ENCODE measurements at regions of chr1 and their contacts with region 1.

Region 1: DNA sequence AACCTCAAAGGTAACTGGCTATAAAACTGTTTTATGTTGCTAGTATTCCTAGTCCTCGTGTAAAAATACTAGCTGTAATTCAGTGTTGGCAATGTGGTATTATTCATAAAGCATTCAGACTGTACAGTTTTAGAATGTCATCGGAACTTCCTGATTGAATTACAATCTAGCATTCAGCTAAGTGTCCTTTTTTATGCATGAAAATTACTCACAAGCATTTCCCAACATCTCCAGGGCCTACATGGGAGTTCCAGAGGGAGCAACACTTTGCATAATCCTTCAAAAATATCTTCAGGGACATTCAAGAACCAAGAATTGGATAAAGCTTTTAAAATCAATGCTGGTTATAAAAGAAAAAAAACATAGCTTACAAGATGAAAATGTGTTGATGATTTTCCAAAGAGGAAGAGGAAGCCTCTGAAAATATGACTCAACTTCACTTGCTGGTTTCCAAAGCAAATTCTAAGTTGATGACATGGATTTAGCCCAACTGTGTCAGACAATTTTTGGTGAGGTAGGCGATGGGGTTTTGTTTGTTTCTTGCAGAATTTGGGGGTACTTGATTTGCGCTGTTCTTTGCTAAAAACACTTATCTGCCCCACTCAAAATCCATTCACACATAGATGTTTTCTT is 137.8 kb downstream of the SLC44A5 start:
- DNase-seq: no peak
- ATAC-seq: no peak
- H3K4me3 ChIP-seq: no peak overlapping the region
- H3K27ac ChIP-seq: no peak overlapping the region
- H3K4me1 ChIP-seq: no peaks in the 10 kb centered on the region
- H3K27me3 ChIP-seq: no peaks in the 10 kb centered on the region
- CTCF ChIP-seq: no peak

Region 2: GRCh38 chr1:76160225-76160624 is 687.1 kb after region 1 on chr1:
- intact Hi-C with region 1: loop called in 1 of 10 experiments (anchors 5 kb)
- DNase-seq: no peak
- ATAC-seq: no peak
- H3K4me3 ChIP-seq: no peak overlapping the region
- H3K27ac ChIP-seq: no peak overlapping the region
- H3K4me1 ChIP-seq: peaks cover 0 to 2% (median 0%) of the 10 kb centered on the region in 9 donors
- H3K27me3 ChIP-seq: no peaks in the 10 kb centered on the region
- CTCF ChIP-seq: no peak